Mucosa of descending colon (tissue), 3 donors: ENCODE measurements at regions of chr18 and their contacts with region 1.

Region 1: GRCh38 chr18:58863539-58864145 is 1.0 kb upstream of the ZNF532 start:
- DNase-seq: peak; percentile 74 to 76 (median 75)
- ATAC-seq: peak; percentile 74
- H3K4me3 ChIP-seq: no peak overlapping the region
- H3K4me1 ChIP-seq: peaks cover 5% of the 10 kb centered on the region
- CTCF ChIP-seq: no peak

Region 2: GRCh38 chr18:59067873-59068272 is 204.2 kb after region 1 on chr18:
- intact Hi-C with region 1: loop called in 1 of 2 experiments (anchors 10 kb)
- DNase-seq: peak in 1 of 3 donors; percentile 69
- ATAC-seq: no peak
- H3K4me3 ChIP-seq: no peak overlapping the region
- H3K4me1 ChIP-seq: no peaks in the 10 kb centered on the region
- CTCF ChIP-seq: no peak